ENCODE measurements at regions of chr2 and their contacts with region 1.

Region 1: DNA sequence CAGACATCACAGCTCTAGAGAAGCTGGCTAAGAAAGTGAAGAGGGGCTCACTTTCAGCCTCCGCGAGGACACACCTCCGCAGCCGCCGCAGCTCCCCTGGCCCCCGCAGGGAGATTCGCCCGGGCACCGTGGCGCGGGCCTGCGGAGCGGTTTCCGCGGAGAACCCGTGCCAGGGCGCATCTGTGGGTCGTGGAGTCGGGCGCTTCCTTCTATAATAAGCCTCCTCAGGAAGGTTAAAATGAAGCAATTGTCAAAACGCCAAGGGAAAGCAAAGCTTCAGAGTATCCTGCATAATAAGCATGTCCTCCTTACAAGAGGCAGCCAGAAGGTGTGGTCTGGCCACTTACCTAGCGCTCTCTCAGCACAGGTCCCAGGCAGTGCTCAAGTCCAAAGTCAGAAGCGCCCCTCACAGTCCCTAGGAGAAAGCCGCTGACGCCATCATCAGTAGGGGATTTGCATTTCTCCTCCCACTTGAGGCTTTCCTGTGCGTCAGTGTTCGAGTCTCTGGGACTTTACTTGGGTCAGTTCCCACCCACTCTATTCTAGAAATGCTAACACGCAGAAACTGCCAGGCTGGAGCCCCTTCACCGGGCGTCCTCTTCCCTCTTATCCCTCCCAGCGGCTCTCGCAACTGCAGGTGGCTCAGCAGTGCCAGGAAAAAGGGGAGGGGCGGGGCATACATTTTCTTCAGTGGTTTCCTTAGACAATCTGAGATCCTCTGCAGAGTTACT is at the start of gene STAT4:
- DNase-seq: peak; percentile 45
- ATAC-seq: peak; percentile 89
- H3K4me3 ChIP-seq: peak within 1 kb of the TSS; percentile 78
- H3K27ac ChIP-seq: no peak within 1 kb of the TSS
- H3K4me1 ChIP-seq: peaks cover 7% of the 10 kb centered on the region
- H3K27me3 ChIP-seq: peaks cover 0 to 3% of the 10 kb centered on the region in 2 experiments; a peak in 1 of 4 replicates
- CTCF ChIP-seq: no peak; a peak in 1 of 6 replicates
- EP300 ChIP-seq: peak; percentile 84 to 89; a peak in 3 of 4 replicates
- POLR2A ChIP-seq: peak; percentile 62
- RAD21 ChIP-seq: peak; percentile 28; the same call in 1 of the 2 replicates
- polyA plus RNA-seq, gene STAT4: 3.1 to 4.4 TPM

Region 2: DNA sequence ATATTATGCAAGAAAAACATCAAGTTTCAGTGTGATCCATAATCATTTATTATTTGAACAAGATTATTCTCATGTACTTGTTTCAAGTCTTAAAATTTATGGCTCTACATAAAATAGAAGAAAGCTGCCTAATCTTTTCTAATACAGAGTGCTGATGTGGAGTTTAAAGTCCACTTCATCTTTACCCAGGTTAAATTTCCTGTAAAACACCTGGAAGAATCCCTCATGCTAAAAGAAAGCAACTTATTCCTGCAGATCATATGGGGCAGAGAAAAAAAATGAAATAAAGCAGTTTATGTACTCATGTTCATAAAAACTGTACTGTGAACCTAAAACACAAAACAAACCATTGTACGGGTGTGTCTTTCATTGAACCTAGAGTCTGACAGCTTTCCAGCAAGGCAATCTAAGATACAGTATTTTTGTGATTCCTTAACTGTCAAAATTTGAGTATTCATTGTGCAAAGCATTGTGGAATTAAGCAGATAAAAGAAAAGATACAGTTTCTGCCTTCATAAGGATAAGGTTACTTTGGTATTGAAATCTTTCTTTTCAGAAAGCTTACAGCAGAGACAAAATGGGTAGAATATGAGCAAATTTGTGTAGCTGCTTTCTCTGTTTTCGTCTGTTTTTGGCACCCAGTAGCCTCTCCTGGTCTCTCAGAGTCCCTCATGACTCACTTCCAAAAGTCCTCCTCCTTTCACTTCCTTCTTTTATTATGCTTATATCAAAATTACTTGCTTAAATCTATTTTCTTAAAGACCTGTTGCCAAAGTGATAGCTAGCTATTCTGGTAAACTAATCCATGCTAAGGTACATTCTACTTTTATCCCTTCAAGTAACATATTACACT is 297.0 kb before region 1 on chr2:
- CTCF ChIA-PET with region 1: interaction called, 16 read pairs
- POLR2A ChIA-PET with region 1: no interaction called
- RAD21 ChIA-PET with region 1: interaction called, 6 read pairs
- SMC1A ChIA-PET with region 1: interaction called, 5 read pairs
- in situ Hi-C with region 1: no loop called
- intact Hi-C with region 1: no loop called
- DNase-seq: no peak
- ATAC-seq: peak; percentile 74
- H3K4me3 ChIP-seq: no peak overlapping the region
- H3K27ac ChIP-seq: no peak overlapping the region
- H3K4me1 ChIP-seq: no peaks in the 10 kb centered on the region
- H3K27me3 ChIP-seq: no peaks in the 10 kb centered on the region
- CTCF ChIP-seq: no peak
- EP300 ChIP-seq: no peak
- POLR2A ChIP-seq: no peak
- RAD21 ChIP-seq: no peak

Region 3: GRCh38 chr2:191059308-191059707 is 91.5 kb before region 1 on chr2:
- CTCF ChIA-PET with region 1: interaction called, 659 read pairs
- POLR2A ChIA-PET with region 1: no interaction called
- RAD21 ChIA-PET with region 1: interaction called, 324 read pairs
- SMC1A ChIA-PET with region 1: interaction called, 393 read pairs
- in situ Hi-C with region 1: loop called (anchors 5 kb)
- intact Hi-C with region 1: no loop called
- DNase-seq: no peak
- ATAC-seq: peak; percentile 34; the same call in 1 of the 3 replicates
- H3K4me3 ChIP-seq: no peak overlapping the region
- H3K27ac ChIP-seq: no peak overlapping the region
- H3K4me1 ChIP-seq: no peaks in the 10 kb centered on the region
- H3K27me3 ChIP-seq: no peaks in the 10 kb centered on the region
- CTCF ChIP-seq: no peak
- EP300 ChIP-seq: no peak
- POLR2A ChIP-seq: no peak
- RAD21 ChIP-seq: no peak

Region 4: DNA sequence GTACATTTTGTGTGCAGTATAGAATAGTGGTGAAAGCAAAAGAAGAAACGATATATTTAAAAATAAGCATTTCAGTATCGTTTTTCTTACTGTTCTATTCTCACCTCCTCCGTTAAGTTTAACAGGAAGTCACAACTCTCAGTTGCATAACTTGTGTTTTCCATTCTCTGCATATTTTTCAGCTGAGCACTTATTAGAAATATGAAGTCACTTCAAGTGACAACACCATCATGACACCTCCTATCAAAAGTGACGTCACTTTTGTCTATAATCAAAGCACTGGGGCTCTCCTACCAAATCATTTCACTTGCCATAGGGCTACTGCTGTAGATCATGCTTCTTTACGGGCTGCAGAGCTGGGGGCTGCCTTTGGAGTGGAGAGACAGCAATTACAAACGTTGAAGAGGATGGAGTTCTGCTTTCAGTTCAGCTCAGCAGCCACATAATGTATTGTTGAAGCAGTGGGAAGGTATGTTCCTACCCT is 36.3 kb before region 1 on chr2:
- CTCF ChIA-PET with region 1: interaction called, 29 read pairs
- POLR2A ChIA-PET with region 1: interaction called, 3 read pairs
- RAD21 ChIA-PET with region 1: interaction called, 4 read pairs
- SMC1A ChIA-PET with region 1: interaction called, 11 read pairs
- in situ Hi-C with region 1: no loop called
- intact Hi-C with region 1: loop called (anchors 2 kb)
- DNase-seq: peak; percentile 55
- ATAC-seq: peak; percentile 79
- H3K4me3 ChIP-seq: 0 out of 2 replicates have a peak overlapping the region, but pooled peaks have one; percentile 19
- H3K27ac ChIP-seq: peak overlapping the region; percentile 38; the same call in 1 of the 2 replicates
- H3K4me1 ChIP-seq: peaks cover 35% of the 10 kb centered on the region
- H3K27me3 ChIP-seq: no peaks in the 10 kb centered on the region
- CTCF ChIP-seq: no peak
- EP300 ChIP-seq: peak in 1 of 2 experiments; percentile 46; a peak in 1 of 4 replicates
- POLR2A ChIP-seq: no peak
- RAD21 ChIP-seq: no peak

Region 5: GRCh38 chr2:191165176-191165643 is 14.4 kb after region 1 on chr2:
- CTCF ChIA-PET with region 1: interaction called, 36 read pairs
- POLR2A ChIA-PET with region 1: no interaction called
- RAD21 ChIA-PET with region 1: no interaction called
- SMC1A ChIA-PET with region 1: interaction called, 27 read pairs
- in situ Hi-C with region 1: no loop called
- intact Hi-C with region 1: no loop called
- DNase-seq: no peak
- ATAC-seq: peak; percentile 93
- H3K4me3 ChIP-seq: no peak overlapping the region
- H3K27ac ChIP-seq: no peak overlapping the region
- H3K4me1 ChIP-seq: no peaks in the 10 kb centered on the region
- H3K27me3 ChIP-seq: no peaks in the 10 kb centered on the region
- CTCF ChIP-seq: peak; percentile 41 to 81 (median 62); a peak in 5 of 6 replicates
- EP300 ChIP-seq: no peak
- POLR2A ChIP-seq: no peak
- RAD21 ChIP-seq: peak; percentile 95

Region 6: GRCh38 chr2:191218292-191218898 is 67.6 kb after region 1 on chr2:
- CTCF ChIA-PET with region 1: interaction called, 17 read pairs
- POLR2A ChIA-PET with region 1: no interaction called
- RAD21 ChIA-PET with region 1: no interaction called
- SMC1A ChIA-PET with region 1: interaction called, 7 read pairs
- in situ Hi-C with region 1: no loop called
- intact Hi-C with region 1: no loop called
- DNase-seq: no peak
- ATAC-seq: peak; percentile 85
- H3K4me3 ChIP-seq: no peak overlapping the region
- H3K27ac ChIP-seq: no peak overlapping the region
- H3K4me1 ChIP-seq: peaks cover 6% of the 10 kb centered on the region
- H3K27me3 ChIP-seq: no peaks in the 10 kb centered on the region
- CTCF ChIP-seq: peak; percentile 46 to 69 (median 47); a peak in 5 of 6 replicates
- EP300 ChIP-seq: no peak
- POLR2A ChIP-seq: no peak
- RAD21 ChIP-seq: peak; percentile 68

Region 7: GRCh38 chr2:191664823-191665677 is 514.3 kb after region 1 on chr2:
- CTCF ChIA-PET with region 1: no interaction called
- POLR2A ChIA-PET with region 1: no interaction called
- RAD21 ChIA-PET with region 1: no interaction called
- SMC1A ChIA-PET with region 1: no interaction called
- in situ Hi-C with region 1: no loop called
- intact Hi-C with region 1: no loop called
- DNase-seq: no peak
- ATAC-seq: no peak
- H3K4me3 ChIP-seq: no peak overlapping the region
- H3K27ac ChIP-seq: no peak overlapping the region
- H3K4me1 ChIP-seq: peaks cover 24% of the 10 kb centered on the region; the same call in 1 of the 2 replicates
- H3K27me3 ChIP-seq: no peaks in the 10 kb centered on the region
- CTCF ChIP-seq: no peak
- EP300 ChIP-seq: no peak
- POLR2A ChIP-seq: no peak
- RAD21 ChIP-seq: no peak